Adrenal gland (tissue), 19 donors: ENCODE measurements at regions of chr7 and their contacts with region 1.

Region 1: DNA sequence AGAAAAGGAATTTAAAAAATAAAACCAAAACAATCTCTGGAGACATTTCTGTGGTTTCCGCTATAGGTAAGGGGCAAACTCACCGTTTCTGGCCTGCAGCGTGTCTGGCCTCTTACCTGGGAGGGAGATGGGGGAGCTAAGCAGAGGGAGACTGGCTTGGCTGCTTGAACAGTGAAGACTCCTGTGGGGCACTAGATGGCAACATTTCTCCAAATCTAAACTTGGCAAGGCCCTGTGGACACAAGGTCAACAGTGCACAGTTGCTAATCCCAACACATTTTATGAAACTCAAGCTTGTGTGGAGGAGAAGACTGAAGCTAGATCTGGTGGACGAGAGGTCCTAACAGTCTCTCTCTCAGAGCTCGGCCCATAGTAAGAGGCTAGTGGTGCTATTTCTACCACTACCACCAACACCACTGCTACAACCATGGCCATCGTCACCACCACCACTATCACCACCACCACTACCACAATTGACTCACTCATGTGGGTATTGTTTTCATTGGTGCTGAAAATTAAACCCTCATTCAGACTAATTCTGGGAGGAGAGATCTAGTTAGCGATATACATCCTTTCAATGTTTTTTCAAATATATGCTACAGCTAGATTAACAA is 28.4 kb upstream of the CDHR3 start:
- DNase-seq: peak; percentile 31 to 79 (median 66)
- H3K4me3 ChIP-seq: no peak overlapping the region
- H3K27ac ChIP-seq: no peak overlapping the region
- H3K4me1 ChIP-seq: peaks cover 3% of the 10 kb centered on the region in 2 donors
- H3K27me3 ChIP-seq: no peaks in the 10 kb centered on the region
- CTCF ChIP-seq: peak; percentile 33 to 72 (median 60)
- POLR2A ChIP-seq: no peak

Region 2: DNA sequence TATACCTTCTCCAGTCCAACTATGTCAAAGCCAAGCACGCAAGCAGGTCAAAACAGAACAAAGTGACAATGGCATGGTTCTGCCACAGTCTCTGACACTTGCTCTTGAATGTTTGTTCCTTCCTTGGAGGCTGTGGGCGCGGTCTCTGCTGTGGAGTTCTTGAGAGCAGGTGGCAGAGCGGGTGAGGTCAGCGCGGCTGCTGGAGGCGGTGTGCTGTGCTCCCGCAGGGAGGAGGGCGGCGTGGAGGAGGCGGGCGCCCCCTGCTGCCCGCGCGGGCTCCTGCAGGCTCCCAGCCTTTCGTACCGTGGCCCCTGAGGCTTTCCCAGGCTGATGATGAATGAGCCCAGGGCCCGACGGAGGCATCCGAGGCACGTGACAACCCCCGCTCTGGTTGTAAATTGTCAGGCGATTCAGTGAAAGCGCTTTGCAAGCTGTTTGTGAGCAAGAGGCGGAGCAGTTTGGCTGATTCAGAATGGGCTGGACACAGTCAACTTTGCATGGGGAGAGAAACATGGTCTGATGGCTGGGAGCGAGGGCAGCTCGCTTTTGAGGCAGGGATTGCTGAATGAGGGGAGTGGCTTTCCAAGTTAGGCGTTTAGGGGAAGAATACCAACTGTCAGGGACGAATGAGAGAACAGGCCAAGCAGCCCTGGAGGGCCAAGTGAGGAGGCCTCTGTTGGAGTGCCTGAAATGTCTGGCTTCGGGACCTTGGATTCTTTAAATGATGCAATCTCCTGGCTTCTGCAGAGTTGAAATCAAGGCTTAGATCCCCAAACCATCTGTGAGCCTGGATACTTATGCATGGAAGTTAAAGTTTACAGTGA is 74.9 kb after region 1 on chr7:
- intact Hi-C with region 1: loop called in 1 of 2 experiments (anchors 10 kb)
- DNase-seq: peak; percentile 85 to 93 (median 91)
- H3K4me3 ChIP-seq: peak overlapping the region in 1 of 4 donors; percentile 43
- H3K27ac ChIP-seq: peak overlapping the region; percentile 12 to 83 (median 53)
- H3K4me1 ChIP-seq: peaks cover 3 to 18% of the 10 kb centered on the region in 2 donors
- H3K27me3 ChIP-seq: no peaks in the 10 kb centered on the region
- CTCF ChIP-seq: peak; percentile 86 to 98 (median 94)
- POLR2A ChIP-seq: peak in 1 of 2 donors; percentile 65

Region 3: GRCh38 chr7:106041140-106041717 is 106.5 kb after region 1 on chr7:
- intact Hi-C with region 1: loop called (anchors 5 to 10 kb)
- DNase-seq: peak in 5 of 7 donors; percentile 27 to 61 (median 50)
- H3K4me3 ChIP-seq: no peak overlapping the region
- H3K27ac ChIP-seq: no peak overlapping the region
- H3K4me1 ChIP-seq: peaks cover 4 to 7% of the 10 kb centered on the region in 2 donors
- H3K27me3 ChIP-seq: no peaks in the 10 kb centered on the region
- CTCF ChIP-seq: peak; percentile 43 to 65 (median 56)
- POLR2A ChIP-seq: no peak